GM12878 (cell line): ENCODE measurements at regions of chr17 and their contacts with region 1.

Region 1: GRCh38 chr17:40791787-40792436 is 7.8 kb downstream of the KRT28 start:
- DNase-seq: no peak
- ATAC-seq: peak; percentile 44; the same call in 1 of the 3 replicates
- H3K4me3 ChIP-seq: no peak overlapping the region
- H3K27ac ChIP-seq: no peak overlapping the region
- H3K4me1 ChIP-seq: no peaks in the 10 kb centered on the region
- H3K27me3 ChIP-seq: peaks cover 2 to 7% of the 10 kb centered on the region in 2 experiments; a peak in 1 of 4 replicates
- CTCF ChIP-seq: peak; percentile 44 to 61 (median 59)
- EP300 ChIP-seq: no peak
- POLR2A ChIP-seq: no peak
- RAD21 ChIP-seq: peak; percentile 52

Region 2: DNA sequence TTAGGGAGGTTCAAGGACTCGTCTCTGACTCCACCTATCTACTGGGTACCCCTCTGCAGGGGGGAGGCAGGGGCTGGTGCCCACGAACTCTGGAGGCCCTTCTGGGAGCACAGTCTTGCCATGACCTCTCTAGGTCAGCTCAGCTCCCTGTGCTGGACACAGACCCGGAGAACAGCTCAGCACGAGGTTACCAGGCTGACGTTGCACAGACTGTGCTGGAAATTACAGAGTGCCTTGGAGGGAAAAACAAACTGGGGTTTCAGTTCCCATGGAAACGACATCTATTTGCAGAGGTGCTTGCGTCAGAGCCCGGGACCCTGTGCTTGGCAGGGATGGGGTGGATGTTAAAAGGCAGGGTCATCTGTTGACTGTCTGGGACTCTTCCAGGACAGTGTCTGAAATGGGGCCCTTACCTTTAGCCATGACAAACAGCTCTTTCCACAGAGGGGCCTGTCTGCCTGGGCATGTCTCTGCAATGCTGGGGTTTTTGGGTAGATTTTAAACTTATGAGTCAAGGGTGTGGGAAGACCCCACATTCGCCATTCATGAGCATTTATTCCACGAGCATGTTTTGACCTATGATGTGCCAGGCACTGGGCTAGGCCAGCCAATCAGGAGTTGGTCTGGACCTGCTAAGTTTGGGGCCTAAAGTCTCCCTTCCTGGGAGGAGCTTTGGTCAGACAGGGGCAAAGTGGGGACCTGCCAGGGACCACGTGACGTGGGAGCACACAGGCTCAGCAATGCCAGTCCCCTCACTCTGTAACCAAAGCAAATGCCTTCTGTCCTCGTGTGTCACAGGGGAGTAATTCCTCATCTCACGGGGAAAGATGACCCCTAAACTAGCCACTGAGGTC is 249.1 kb before region 1 on chr17:
- CTCF ChIA-PET with region 1: no interaction called
- POLR2A ChIA-PET with region 1: no interaction called
- RAD21 ChIA-PET with region 1: no interaction called
- SMC1A ChIA-PET with region 1: no interaction called
- in situ Hi-C with region 1: no loop called
- intact Hi-C with region 1: loop called (anchors 10 kb)
- DNase-seq: no peak
- ATAC-seq: peak; percentile 67
- H3K4me3 ChIP-seq: no peak overlapping the region
- H3K27ac ChIP-seq: peak overlapping the region; percentile 30
- H3K4me1 ChIP-seq: peaks cover 56% of the 10 kb centered on the region
- H3K27me3 ChIP-seq: no peaks in the 10 kb centered on the region; a peak in 1 of 4 replicates
- CTCF ChIP-seq: no peak
- EP300 ChIP-seq: peak; percentile 33 to 73; a peak in 3 of 4 replicates
- POLR2A ChIP-seq: peak; percentile 40; the same call in 1 of the 2 replicates
- RAD21 ChIP-seq: no peak

Region 3: GRCh38 chr17:40647624-40648383 is 144.1 kb before region 1 on chr17 and contains the start of gene SMARCE1:
- CTCF ChIA-PET with region 1: interaction called, 13 read pairs
- POLR2A ChIA-PET with region 1: no interaction called
- RAD21 ChIA-PET with region 1: interaction called, 16 read pairs
- SMC1A ChIA-PET with region 1: interaction called, 7 read pairs
- in situ Hi-C with region 1: no loop called
- intact Hi-C with region 1: no loop called
- DNase-seq: no peak
- ATAC-seq: peak; percentile 85
- H3K4me3 ChIP-seq: peak within 1 kb of the TSS; percentile 89
- H3K27ac ChIP-seq: peak within 1 kb of the TSS; percentile 98
- H3K4me1 ChIP-seq: no peaks in the 10 kb centered on the region
- H3K27me3 ChIP-seq: no peaks in the 10 kb centered on the region
- CTCF ChIP-seq: no peak
- EP300 ChIP-seq: peak in 1 of 2 experiments; percentile 99; a peak in 2 of 4 replicates
- POLR2A ChIP-seq: peak; percentile 89
- RAD21 ChIP-seq: no peak
- polyA plus RNA-seq, gene SMARCE1: 124 to 145 TPM